Aorta (tissue), 5 donors: ENCODE measurements at regions of chr1 and their contacts with region 1.

Region 1: GRCh38 chr1:117067533-117068370 is 7.6 kb downstream of the TTF2 start:
- DNase-seq: peak in 1 of 2 donors; percentile 53
- ATAC-seq: peak; percentile 90
- H3K4me3 ChIP-seq: no peak overlapping the region
- H3K27ac ChIP-seq: no peak overlapping the region
- H3K4me1 ChIP-seq: no peaks in the 10 kb centered on the region
- H3K27me3 ChIP-seq: no peaks in the 10 kb centered on the region

Region 2: DNA sequence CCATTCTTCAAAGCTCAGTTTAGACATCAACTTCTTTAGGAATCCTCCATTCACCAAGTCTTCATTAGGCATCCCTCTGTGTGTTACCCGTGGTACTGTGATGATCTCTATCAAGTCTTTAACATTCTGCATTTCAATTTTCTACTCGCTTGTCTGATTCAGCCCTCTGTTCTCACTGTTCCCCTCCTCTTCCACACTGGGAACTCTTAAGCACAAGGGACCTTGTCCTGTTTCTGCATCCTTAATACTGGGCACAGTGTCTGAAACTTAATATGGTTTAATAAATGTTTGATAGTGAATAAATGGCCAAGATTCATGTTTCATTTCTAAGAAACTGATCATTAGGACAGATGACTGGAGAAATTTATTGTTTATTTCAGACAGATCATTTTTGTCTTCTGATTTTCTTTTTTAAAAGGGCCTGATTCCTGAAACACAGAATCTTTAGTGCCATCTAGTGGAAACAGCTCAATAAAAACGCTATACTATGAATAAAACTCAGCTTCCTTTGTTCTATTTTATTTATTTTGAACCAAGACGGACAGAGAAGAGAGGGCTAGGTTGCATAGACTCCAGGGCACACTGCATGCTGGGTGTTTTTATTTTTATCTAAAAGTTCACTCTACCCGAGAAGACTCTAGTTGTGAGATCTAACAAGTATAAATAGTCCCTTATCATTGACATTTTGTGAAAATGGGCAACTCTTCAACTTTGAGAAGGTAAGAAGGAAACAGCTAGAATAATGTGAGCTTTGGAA is 60.7 kb after region 1 on chr1:
- intact Hi-C with region 1: loop called (anchors 1 to 2 kb)
- DNase-seq: no peak
- ATAC-seq: no peak
- H3K4me3 ChIP-seq: no peak overlapping the region
- H3K27ac ChIP-seq: no peak overlapping the region
- H3K4me1 ChIP-seq: no peaks in the 10 kb centered on the region
- H3K27me3 ChIP-seq: no peaks in the 10 kb centered on the region

Region 3: GRCh38 chr1:117180147-117180967 is 112.6 kb after region 1 on chr1:
- intact Hi-C with region 1: no loop called
- DNase-seq: no peak
- ATAC-seq: no peak
- H3K4me3 ChIP-seq: no peak overlapping the region
- H3K27ac ChIP-seq: no peak overlapping the region
- H3K4me1 ChIP-seq: no peaks in the 10 kb centered on the region
- H3K27me3 ChIP-seq: no peaks in the 10 kb centered on the region

Region 4: DNA sequence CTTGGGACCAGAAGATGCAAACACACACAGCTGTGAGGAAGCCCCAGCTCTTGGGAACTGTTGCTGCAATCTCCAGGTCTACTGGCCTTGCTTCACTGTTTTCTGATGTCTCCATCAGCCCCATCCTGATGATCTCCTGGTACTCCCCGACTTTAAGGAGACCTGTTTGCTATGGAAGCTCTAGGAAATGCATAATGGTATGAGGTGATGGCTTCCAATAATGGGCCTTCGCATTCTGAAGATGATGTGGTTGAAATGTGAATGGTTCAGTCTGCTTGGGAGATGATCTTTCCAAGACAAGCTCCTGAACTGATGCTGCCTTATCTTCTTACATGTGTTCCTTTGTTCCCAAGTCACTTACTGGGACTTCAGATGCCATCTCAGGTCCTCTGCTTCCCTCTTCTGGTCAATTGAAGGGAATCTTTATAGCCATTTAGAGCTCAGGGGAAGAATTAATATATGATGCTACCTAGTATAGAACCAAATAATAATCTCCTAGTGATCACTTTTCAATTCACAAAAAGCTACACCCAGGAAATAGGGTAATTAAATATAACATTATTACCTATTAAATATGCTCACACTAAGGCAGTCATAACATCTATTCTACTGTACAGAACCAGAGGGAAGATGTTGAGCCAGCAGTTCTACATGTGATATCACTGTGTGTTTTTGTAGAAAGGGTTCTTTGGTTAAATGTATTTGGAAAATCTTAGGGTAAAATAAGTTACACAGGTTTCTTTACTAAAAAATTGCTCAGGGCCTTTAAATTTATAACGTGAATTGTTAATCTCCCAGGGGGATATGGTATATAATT is 216.9 kb after region 1 on chr1:
- intact Hi-C with region 1: loop called (anchors 5 kb)
- DNase-seq: no peak
- ATAC-seq: no peak
- H3K4me3 ChIP-seq: no peak overlapping the region
- H3K27ac ChIP-seq: no peak overlapping the region
- H3K4me1 ChIP-seq: no peaks in the 10 kb centered on the region
- H3K27me3 ChIP-seq: no peaks in the 10 kb centered on the region